Kidney (tissue), 22 donors: ENCODE measurements at regions of chr1 and their contacts with region 1.

Region 1: DNA sequence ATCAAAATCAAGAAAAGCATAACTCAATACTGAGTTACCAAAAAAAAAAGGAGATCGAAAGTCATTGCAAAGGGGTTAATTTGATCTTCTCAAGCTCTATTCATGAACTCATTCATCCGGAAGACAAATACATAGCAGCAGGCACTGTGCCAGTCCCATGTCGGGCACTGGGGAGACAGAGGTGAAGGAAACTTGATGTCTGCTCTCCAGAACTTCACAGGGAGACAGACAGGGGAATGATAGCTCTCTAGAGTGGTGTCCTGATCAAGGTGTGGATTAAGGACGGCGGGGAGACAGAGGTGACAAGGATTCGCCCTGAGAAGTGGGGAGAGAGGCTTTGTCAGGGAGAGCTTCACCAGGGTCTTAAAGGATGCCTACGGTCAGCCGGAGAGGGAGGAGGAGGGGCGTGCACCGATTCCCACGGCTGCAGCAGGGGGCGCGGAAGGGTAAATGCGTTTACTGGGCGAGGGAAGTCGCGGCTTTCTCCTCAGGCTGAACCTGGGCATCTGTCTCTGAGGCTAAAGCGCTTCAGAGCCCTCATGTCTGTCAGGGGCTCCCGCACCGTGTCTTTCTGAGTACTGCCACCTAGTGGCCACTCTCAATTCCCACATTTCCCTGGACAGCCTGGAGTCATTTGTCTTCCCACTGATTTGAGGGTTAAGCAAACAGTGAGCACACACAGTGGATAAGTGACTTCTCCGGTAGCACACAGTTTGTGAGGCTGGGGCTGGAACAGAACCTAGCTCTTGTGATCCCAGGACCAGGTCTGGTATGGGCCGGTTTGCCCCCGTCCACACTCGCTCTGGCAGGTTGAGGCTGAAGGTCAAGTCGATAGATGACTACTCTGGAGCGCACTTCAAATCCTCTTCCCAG is 152.8 kb downstream of the TENT5C start:
- DNase-seq: peak; percentile 80 to 93 (median 88)
- H3K4me3 ChIP-seq: peak overlapping the region; percentile 26 to 61 (median 54)
- H3K27ac ChIP-seq: no peak overlapping the region
- H3K4me1 ChIP-seq: peaks cover 0 to 8% (median 0%) of the 10 kb centered on the region in 3 donors
- H3K27me3 ChIP-seq: no peaks in the 10 kb centered on the region
- CTCF ChIP-seq: peak; percentile 87

Region 2: DNA sequence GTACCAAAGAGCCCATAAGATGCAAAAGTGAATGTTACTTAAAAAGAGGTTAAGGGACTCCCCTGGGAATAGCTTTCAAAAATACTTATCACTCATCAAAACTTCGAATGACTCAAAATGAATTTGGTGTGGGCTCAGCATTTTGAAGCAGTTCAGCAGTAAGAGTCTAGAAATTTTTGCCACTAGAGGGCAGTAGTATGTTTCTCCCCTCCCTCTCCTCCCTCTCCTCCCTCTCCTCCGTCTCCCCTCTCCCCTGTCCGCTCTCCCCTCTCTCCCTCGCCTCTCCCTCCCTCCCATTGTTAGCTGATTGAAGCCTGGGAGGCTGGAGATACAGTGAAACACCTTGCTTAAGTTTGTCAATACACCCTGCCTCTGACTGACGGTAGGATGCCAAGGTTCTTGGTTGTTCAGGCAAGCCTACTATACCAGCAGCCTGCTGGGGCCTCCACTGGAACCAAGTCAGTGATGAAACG is 223.6 kb before region 1 on chr1:
- intact Hi-C with region 1: loop called (anchors 10 kb)
- DNase-seq: peak in 4 of 5 donors; percentile 47 to 73 (median 60)
- H3K4me3 ChIP-seq: no peak overlapping the region
- H3K27ac ChIP-seq: no peak overlapping the region
- H3K4me1 ChIP-seq: no peaks in the 10 kb centered on the region
- H3K27me3 ChIP-seq: no peaks in the 10 kb centered on the region
- CTCF ChIP-seq: peak; percentile 65

Region 3: GRCh38 chr1:117572546-117572945 is 186.1 kb before region 1 on chr1:
- intact Hi-C with region 1: no loop called
- DNase-seq: no peak
- H3K4me3 ChIP-seq: no peak overlapping the region
- H3K27ac ChIP-seq: no peak overlapping the region
- H3K4me1 ChIP-seq: peaks cover 0 to 2% (median 0%) of the 10 kb centered on the region in 3 donors
- H3K27me3 ChIP-seq: no peaks in the 10 kb centered on the region
- CTCF ChIP-seq: no peak